OCI-LY7 (cell line): ENCODE measurements at regions of chr7 and their contacts with region 1.

Region 1: GRCh38 chr7:154598864-154599263 is 404.1 kb downstream of the PAXIP1 start:
- DNase-seq: no peak
- H3K4me3 ChIP-seq: no peak overlapping the region
- H3K27ac ChIP-seq: no peak overlapping the region
- H3K4me1 ChIP-seq: no peaks in the 10 kb centered on the region
- CTCF ChIP-seq: no peak

Region 2: DNA sequence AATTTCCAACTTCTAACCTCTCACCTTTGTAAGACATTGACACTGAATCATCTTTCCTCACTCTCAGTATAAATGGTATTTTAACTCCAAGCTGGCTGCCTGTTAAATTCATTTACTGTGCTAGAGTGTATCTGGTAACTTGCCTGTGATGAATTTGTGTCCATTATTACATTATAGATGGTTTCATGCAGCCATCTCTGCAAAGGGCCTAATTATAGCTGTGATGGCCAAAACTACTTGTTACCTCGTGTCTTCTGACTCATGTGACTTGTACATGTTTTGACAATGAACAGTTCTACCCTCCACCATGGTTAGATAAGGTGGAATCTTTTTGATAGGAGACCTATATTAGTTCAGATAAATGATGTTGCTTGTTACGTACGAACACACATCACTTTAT is 12.0 kb after region 1 on chr7:
- CTCF ChIA-PET with region 1: no interaction called
- POLR2A ChIA-PET with region 1: no interaction called
- intact Hi-C with region 1: loop called (anchors 1 kb)
- DNase-seq: no peak
- H3K4me3 ChIP-seq: no peak overlapping the region
- H3K27ac ChIP-seq: no peak overlapping the region
- H3K4me1 ChIP-seq: no peaks in the 10 kb centered on the region
- CTCF ChIP-seq: no peak

Region 3: GRCh38 chr7:154698726-154699291 is 99.9 kb after region 1 on chr7:
- CTCF ChIA-PET with region 1: no interaction called
- POLR2A ChIA-PET with region 1: no interaction called
- intact Hi-C with region 1: no loop called
- DNase-seq: peak; percentile 3
- H3K4me3 ChIP-seq: no peak overlapping the region
- H3K27ac ChIP-seq: no peak overlapping the region
- H3K4me1 ChIP-seq: no peaks in the 10 kb centered on the region
- CTCF ChIP-seq: peak; percentile 74